ENCODE measurements at regions of chr9 and their contacts with region 1.

Region 1: GRCh38 chr9:37429441-37430311 is 7.2 kb downstream of the GRHPR start:
- DNase-seq: no peak
- ATAC-seq: no peak
- H3K4me3 ChIP-seq: no peak overlapping the region
- H3K4me3 Mint-ChIP-seq: no peak overlapping the region
- H3K27ac ChIP-seq: no peak overlapping the region
- H3K27ac Mint-ChIP-seq: no peak overlapping the region
- H3K4me1 ChIP-seq: peaks cover 7% of the 10 kb centered on the region
- H3K4me1 Mint-ChIP-seq: peaks cover 5% of the 10 kb centered on the region
- H3K27me3 ChIP-seq: no peaks in the 10 kb centered on the region
- H3K27me3 Mint-ChIP-seq: no peaks in the 10 kb centered on the region
- CTCF ChIP-seq: no peak

Region 2: GRCh38 chr9:37455884-37456647 is 26.4 kb after region 1 on chr9:
- CTCF ChIA-PET with region 1: no interaction called
- POLR2A ChIA-PET with region 1: no interaction called
- intact Hi-C with region 1: loop called in 1 of 2 experiments (anchors 1 kb)
- DNase-seq: no peak
- ATAC-seq: no peak
- H3K4me3 ChIP-seq: no peak overlapping the region
- H3K4me3 Mint-ChIP-seq: no peak overlapping the region
- H3K27ac ChIP-seq: no peak overlapping the region
- H3K27ac Mint-ChIP-seq: peak overlapping the region; percentile 66
- H3K4me1 ChIP-seq: peaks cover 14% of the 10 kb centered on the region
- H3K4me1 Mint-ChIP-seq: peaks cover 70% of the 10 kb centered on the region
- H3K27me3 ChIP-seq: no peaks in the 10 kb centered on the region
- H3K27me3 Mint-ChIP-seq: no peaks in the 10 kb centered on the region
- CTCF ChIP-seq: no peak